ENCODE measurements at regions of chr6 and their contacts with region 1.

Region 1: GRCh38 chr6:26216356-26216885 is 129.2 kb downstream of the HFE start:
- DNase-seq: peak; percentile 70
- H3K4me3 ChIP-seq: peak overlapping the region; percentile 69
- H3K27ac ChIP-seq: peak overlapping the region; percentile 92 to 98
- H3K4me1 ChIP-seq: peaks cover 0 to 3% of the 10 kb centered on the region in 2 experiments; a peak in 1 of 4 replicates
- H3K27me3 ChIP-seq: no peaks in the 10 kb centered on the region
- CTCF ChIP-seq: no peak
- EP300 ChIP-seq: no peak
- RAD21 ChIP-seq: no peak

Region 2: DNA sequence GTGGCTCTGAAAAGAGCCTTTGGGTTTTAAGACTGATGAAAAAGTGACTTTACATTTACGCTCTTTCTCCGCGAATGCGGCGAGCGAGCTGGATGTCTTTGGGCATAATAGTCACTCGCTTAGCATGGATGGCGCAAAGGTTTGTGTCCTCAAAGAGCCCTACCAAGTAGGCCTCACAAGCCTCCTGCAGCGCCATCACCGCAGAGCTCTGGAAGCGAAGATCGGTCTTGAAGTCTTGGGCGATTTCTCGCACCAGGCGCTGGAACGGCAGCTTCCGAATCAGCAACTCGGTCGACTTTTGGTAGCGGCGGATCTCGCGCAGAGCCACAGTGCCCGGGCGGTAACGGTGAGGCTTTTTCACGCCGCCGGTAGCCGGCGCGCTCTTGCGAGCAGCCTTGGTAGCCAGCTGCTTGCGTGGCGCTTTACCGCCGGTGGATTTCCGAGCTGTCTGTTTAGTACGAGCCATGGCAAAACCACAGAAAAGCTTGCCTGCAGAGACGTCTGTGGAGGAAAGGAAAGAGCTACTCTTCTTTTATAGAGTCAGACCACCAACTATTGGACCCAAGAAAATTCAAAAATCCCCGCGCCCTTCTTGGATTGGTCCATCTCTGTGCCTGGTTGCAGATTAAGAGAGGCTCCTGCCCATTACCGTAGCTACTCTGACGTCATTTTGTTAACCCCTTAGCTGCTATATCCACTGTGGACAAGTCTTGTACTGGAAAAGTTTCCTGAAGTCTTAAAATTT is 184.7 kb before region 1 on chr6:
- CTCF ChIA-PET with region 1: interaction called, 3 read pairs
- POLR2A ChIA-PET with region 1: interaction called, 34 read pairs
- DNase-seq: peak; percentile 89
- H3K4me3 ChIP-seq: peak overlapping the region; percentile 73 to 84
- H3K27ac ChIP-seq: peak overlapping the region; percentile 92 to 99
- H3K4me1 ChIP-seq: peaks cover 10 to 23% of the 10 kb centered on the region in 2 experiments; a peak in 3 of 4 replicates
- H3K27me3 ChIP-seq: no peaks in the 10 kb centered on the region
- CTCF ChIP-seq: peak; percentile 30
- EP300 ChIP-seq: peak; percentile 52 to 61; a peak in 2 of 4 replicates
- RAD21 ChIP-seq: no peak

Region 3: GRCh38 chr6:26122793-26123674 is 93.4 kb before region 1 on chr6:
- CTCF ChIA-PET with region 1: no interaction called
- POLR2A ChIA-PET with region 1: interaction called, 48 read pairs
- DNase-seq: peak; percentile 76
- H3K4me3 ChIP-seq: peak overlapping the region; percentile 84 to 94
- H3K27ac ChIP-seq: peak overlapping the region; percentile 92 to 100
- H3K4me1 ChIP-seq: peaks cover 7% of the 10 kb centered on the region in 2 experiments; a peak in 3 of 4 replicates
- H3K27me3 ChIP-seq: no peaks in the 10 kb centered on the region
- CTCF ChIP-seq: no peak
- EP300 ChIP-seq: peak; percentile 93 to 98
- RAD21 ChIP-seq: no peak

Region 4: DNA sequence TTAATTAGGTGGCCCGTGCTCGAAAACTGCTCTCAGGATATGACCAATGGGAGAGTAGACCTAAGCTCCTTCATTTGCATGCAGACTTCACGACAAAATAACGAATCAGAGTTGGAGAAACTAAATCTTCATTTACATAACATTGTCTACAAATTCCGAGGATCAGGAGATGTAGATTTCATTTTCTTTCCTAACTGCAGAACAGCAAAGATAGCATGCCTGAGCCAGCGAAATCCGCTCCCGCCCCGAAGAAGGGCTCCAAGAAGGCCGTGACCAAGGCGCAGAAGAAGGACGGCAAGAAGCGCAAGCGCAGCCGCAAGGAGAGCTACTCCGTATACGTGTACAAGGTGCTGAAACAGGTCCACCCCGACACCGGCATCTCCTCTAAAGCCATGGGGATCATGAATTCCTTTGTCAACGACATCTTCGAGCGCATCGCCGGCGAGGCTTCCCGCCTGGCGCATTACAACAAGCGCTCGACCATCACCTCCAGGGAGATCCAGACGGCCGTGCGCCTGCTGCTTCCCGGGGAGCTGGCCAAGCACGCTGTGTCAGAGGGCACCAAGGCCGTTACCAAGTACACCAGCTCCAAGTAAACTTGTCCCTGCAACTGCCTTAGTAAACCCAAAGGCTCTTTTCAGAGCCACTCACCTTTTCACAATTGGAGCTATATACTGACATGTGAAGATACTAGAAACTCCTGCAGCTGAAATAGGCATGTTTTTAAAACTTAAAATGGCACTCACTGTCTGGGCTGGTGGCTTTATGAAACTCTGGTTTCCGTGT is 32.6 kb before region 1 on chr6:
- CTCF ChIA-PET with region 1: interaction called, 4 read pairs
- POLR2A ChIA-PET with region 1: interaction called, 48 read pairs
- DNase-seq: peak; percentile 71
- H3K4me3 ChIP-seq: peak overlapping the region; percentile 49 to 56
- H3K27ac ChIP-seq: peak overlapping the region; percentile 62 to 97
- H3K4me1 ChIP-seq: peaks cover 4 to 6% of the 10 kb centered on the region in 2 experiments; a peak in 2 of 4 replicates
- H3K27me3 ChIP-seq: no peaks in the 10 kb centered on the region
- CTCF ChIP-seq: no peak
- EP300 ChIP-seq: peak in 1 of 2 experiments; percentile 39; a peak in 1 of 4 replicates
- RAD21 ChIP-seq: no peak

Region 5: DNA sequence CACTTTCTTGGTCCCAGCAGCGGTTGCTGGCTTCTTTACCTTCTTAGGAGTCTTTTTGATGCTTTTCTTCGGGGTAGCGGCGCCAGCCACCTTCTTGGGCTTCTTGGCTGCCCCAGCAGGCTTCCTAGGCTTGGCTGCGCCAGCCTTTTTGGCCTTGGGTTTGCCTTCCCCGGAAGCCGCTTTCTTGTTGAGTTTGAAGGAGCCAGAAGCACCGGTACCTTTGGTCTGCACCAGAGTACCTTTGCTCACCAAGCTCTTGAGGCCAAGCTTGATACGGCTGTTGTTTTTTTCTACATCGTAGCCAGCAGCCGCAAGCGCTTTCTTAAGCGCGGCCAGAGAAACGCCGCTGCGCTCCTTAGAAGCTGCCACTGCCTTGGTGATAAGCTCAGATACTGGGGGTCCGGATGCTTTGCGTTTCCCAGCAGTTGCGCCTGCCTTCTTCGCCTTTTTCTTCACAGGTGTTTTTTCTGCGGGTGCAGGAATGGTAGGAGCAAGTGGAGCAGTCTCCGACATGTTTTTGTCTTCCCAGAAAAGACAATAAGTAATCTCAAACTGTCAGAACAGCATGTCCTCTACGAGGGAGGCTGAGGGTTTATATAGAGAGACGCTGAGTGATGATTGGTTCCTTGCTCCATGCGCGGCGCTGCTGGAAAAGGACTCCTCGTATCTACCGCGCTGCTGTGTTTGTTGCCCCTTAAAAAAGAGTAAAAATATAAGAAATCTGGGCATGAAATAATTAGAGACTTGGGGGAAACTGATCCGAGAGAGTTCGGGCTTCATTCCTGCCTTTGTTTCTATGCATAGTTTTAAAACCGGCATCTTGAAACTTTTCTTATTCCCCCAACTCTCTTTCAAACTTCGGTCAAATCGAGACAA is 18.2 kb after region 1 on chr6:
- CTCF ChIA-PET with region 1: no interaction called
- POLR2A ChIA-PET with region 1: interaction called, 59 read pairs
- DNase-seq: peak; percentile 73
- H3K4me3 ChIP-seq: peak overlapping the region; percentile 61 to 72
- H3K27ac ChIP-seq: peak overlapping the region; percentile 77 to 85
- H3K4me1 ChIP-seq: peaks cover 0 to 3% of the 10 kb centered on the region in 2 experiments; a peak in 3 of 4 replicates
- H3K27me3 ChIP-seq: no peaks in the 10 kb centered on the region
- CTCF ChIP-seq: no peak
- EP300 ChIP-seq: peak in 1 of 2 experiments; percentile 52; a peak in 1 of 4 replicates
- RAD21 ChIP-seq: no peak

Region 6: GRCh38 chr6:26285143-26286134 is 69.0 kb after region 1 on chr6:
- CTCF ChIA-PET with region 1: no interaction called
- POLR2A ChIA-PET with region 1: interaction called, 43 read pairs
- DNase-seq: peak; percentile 80
- H3K4me3 ChIP-seq: peak overlapping the region; percentile 78 to 89
- H3K27ac ChIP-seq: peak overlapping the region; percentile 95 to 98
- H3K4me1 ChIP-seq: no peaks in the 10 kb centered on the region; a peak in 2 of 4 replicates
- H3K27me3 ChIP-seq: no peaks in the 10 kb centered on the region
- CTCF ChIP-seq: no peak
- EP300 ChIP-seq: peak; percentile 84 to 99
- RAD21 ChIP-seq: 0 out of 2 replicates have a peak, but pooled peaks have one; percentile 4

Region 7: GRCh38 chr6:27871924-27872638 is 1655.7 kb after region 1 on chr6:
- CTCF ChIA-PET with region 1: no interaction called
- POLR2A ChIA-PET with region 1: interaction called, 12 read pairs
- DNase-seq: peak; percentile 91
- H3K4me3 ChIP-seq: peak overlapping the region; percentile 68 to 71
- H3K27ac ChIP-seq: peak overlapping the region; percentile 80 to 97
- H3K4me1 ChIP-seq: peaks cover 0 to 10% of the 10 kb centered on the region in 2 experiments; a peak in 3 of 4 replicates
- H3K27me3 ChIP-seq: no peaks in the 10 kb centered on the region
- CTCF ChIP-seq: peak; percentile 39
- EP300 ChIP-seq: no peak
- RAD21 ChIP-seq: no peak

Measured in SK-N-SH (cell line).